Ovary (tissue), 10 donors: ENCODE measurements at regions of chr11 and their contacts with region 1.

Region 1: DNA sequence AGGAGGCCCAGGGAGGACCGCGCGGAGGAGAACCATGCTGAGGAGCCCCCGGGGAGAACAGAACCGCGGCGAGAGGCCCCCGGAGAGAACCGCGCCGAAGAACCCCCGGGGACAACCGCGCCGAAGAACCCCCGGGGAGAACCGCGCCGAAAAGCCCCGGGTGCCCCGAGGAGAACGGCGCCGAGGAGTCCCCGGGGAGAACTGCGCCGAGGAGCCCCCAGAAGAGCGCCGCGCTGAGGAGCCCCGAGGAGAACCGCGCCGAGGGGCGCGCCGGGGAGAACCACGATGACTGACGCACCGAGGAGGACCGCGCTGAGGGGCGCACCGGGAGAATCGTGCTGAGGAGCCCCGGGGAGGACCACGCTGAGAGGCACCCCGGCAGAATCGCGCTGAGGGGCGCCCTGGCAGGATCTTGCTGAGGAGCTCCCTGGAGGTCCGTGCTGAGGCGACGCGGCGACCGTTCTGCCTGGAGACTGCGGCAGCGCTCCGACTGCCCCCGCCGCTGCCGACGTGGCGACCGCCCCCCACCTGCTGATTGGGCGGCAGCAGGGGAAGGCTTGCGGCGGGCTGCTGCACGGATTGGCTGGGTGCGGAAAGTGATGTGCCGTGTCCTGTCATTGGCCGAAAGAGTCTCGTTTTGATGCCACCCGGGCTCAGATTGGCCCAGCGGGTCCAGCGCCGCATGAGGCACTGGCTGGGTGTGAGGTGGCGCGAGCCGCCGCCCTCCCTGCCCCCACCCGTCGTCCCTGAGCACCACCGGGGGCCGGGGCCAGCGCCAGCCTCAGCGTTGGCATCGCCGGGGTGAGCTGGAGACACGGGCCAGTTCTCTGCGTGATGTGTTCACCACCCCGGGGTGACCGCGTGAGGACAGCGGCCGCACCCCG is at the start of gene KCNQ1OT1:
- DNase-seq: peak; percentile 89 to 92 (median 91)
- H3K4me3 ChIP-seq: peak within 1 kb of the TSS; percentile 81
- H3K27ac ChIP-seq: peak within 1 kb of the TSS; percentile 67 to 80
- H3K4me1 ChIP-seq: peaks cover 6% of the 10 kb centered on the region
- H3K27me3 ChIP-seq: no peaks in the 10 kb centered on the region
- CTCF ChIP-seq: no peak
- EP300 ChIP-seq: no peak
- POLR2A ChIP-seq: peak; percentile 90
- total RNA-seq, gene KCNQ1OT1: 3.9 to 11.5 (median 6.8) TPM

Region 2: GRCh38 chr11:2532704-2533586 is 166.8 kb before region 1 on chr11:
- intact Hi-C with region 1: loop called in 2 of 4 experiments (anchors 10 kb)
- DNase-seq: peak; percentile 92 to 97 (median 96)
- H3K4me3 ChIP-seq: peak overlapping the region; percentile 14
- H3K27ac ChIP-seq: peak overlapping the region in 1 of 2 donors; percentile 39
- H3K4me1 ChIP-seq: peaks cover 7% of the 10 kb centered on the region
- H3K27me3 ChIP-seq: no peaks in the 10 kb centered on the region
- CTCF ChIP-seq: peak; percentile 98 to 99 (median 99)
- EP300 ChIP-seq: no peak
- POLR2A ChIP-seq: peak; percentile 42